ENCODE measurements at regions of chrX and their contacts with region 1.

Region 1: GRCh38 chrX:38999967-39000745 is 198.9 kb downstream of the MID1IP1 start:
- DNase-seq: no peak
- ATAC-seq: no peak
- H3K4me3 ChIP-seq: no peak overlapping the region
- H3K27ac ChIP-seq: no peak overlapping the region
- H3K4me1 ChIP-seq: no peaks in the 10 kb centered on the region
- H3K27me3 ChIP-seq: no peaks in the 10 kb centered on the region

Region 2: GRCh38 chrX:38868941-38869401 is 131.2 kb before region 1 on chrX:
- intact Hi-C with region 1: no loop called
- DNase-seq: peak in 1 of 3 donors; percentile 32
- ATAC-seq: peak; percentile 78 to 86
- H3K4me3 ChIP-seq: no peak overlapping the region
- H3K27ac ChIP-seq: peak overlapping the region; percentile 81
- H3K4me1 ChIP-seq: peaks cover 5% of the 10 kb centered on the region
- H3K27me3 ChIP-seq: no peaks in the 10 kb centered on the region

Region 3: DNA sequence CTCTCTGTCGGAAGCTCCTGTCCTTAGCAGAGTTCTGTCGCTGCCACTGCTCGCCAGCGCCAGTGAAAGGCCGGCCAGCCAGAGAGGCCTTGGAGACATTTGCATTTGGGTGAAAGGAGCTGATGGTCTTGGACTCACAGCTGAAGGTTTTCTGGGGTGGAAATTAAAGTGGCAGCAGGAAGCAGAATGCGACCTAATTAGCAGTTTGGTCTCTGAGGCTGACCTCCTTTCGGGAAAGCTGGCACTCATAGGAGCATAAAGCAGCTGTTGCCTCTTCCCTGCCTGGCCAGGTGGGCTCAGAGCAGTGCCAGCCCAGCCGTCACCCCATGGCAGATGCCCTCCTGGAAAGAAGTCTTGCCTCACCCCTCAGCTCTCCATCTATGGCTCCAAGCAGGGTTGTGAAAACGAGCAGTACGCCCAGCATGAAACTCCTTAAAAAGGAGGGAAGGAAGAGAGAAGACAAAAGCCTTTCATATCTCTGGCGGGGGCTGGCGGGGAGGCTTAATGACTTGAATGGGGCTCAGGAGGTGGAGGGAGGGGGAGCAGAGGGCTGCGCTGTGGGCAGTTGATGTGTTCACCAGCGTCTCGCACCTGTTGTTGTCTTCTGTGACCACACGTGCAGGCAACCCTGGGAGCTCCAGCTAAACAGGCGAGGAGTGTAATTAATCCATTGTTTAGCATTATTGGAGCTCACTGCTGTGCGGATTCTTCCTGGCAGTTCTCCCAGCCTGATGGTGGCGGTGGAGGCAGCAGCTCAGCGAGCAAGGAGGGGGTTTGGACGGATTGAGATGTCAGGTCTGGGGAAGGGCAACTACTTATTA is 65.1 kb after region 1 on chrX:
- intact Hi-C with region 1: loop called in 1 of 4 experiments (anchors 10 kb)
- DNase-seq: no peak
- ATAC-seq: no peak
- H3K4me3 ChIP-seq: no peak overlapping the region
- H3K27ac ChIP-seq: no peak overlapping the region
- H3K4me1 ChIP-seq: no peaks in the 10 kb centered on the region
- H3K27me3 ChIP-seq: no peaks in the 10 kb centered on the region

Measured in right cardiac atrium (tissue), 5 donors.